Activated B cell treated with CpG ODN at 0.5 μM for 24 hours (primary cell): ENCODE measurements at regions of chr14 and their contacts with region 1.

Region 1: DNA sequence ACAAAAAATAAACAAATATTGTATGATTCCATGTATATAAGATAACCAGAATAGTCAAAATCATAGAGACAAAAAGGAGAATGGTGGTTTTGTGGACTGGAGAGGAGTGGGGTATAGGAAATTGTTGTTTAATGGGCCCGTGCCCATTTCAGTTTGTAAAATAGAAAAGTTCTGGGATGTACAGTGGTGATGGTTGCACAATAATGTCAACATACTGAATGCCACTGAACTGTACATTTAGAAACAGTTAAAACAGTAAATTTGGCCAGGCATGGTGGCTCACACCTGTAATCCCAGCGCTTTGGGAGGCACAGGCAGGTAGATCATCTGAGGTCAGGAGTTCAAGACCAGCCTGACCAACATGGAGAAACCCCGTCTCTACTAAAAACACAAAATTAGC is 40.1 kb downstream of the NUMB start:
- DNase-seq: no peak
- ATAC-seq: no peak
- H3K4me3 Mint-ChIP-seq: no peak overlapping the region
- H3K27ac Mint-ChIP-seq: no peak overlapping the region
- H3K4me1 Mint-ChIP-seq: peaks cover 54% of the 10 kb centered on the region
- H3K27me3 Mint-ChIP-seq: no peaks in the 10 kb centered on the region
- CTCF ChIP-seq: no peak

Region 2: GRCh38 chr14:73403181-73403752 is 15.0 kb before region 1 on chr14:
- CTCF ChIA-PET with region 1: interaction called, 4 read pairs
- POLR2A ChIA-PET with region 1: interaction called, 14 read pairs
- intact Hi-C with region 1: loop called (anchors 1 kb)
- DNase-seq: no peak
- ATAC-seq: no peak
- H3K4me3 Mint-ChIP-seq: no peak overlapping the region
- H3K27ac Mint-ChIP-seq: peak overlapping the region; percentile 88
- H3K4me1 Mint-ChIP-seq: peaks cover 57% of the 10 kb centered on the region
- H3K27me3 Mint-ChIP-seq: no peaks in the 10 kb centered on the region
- CTCF ChIP-seq: no peak

Region 3: GRCh38 chr14:73463411-73463810 is 45.2 kb after region 1 on chr14:
- CTCF ChIA-PET with region 1: no interaction called
- POLR2A ChIA-PET with region 1: interaction called, 6 read pairs
- intact Hi-C with region 1: loop called (anchors 2 kb)
- DNase-seq: no peak
- ATAC-seq: no peak
- H3K4me3 Mint-ChIP-seq: no peak overlapping the region
- H3K27ac Mint-ChIP-seq: peak overlapping the region; percentile 59
- H3K4me1 Mint-ChIP-seq: peaks cover 55% of the 10 kb centered on the region
- H3K27me3 Mint-ChIP-seq: no peaks in the 10 kb centered on the region
- CTCF ChIP-seq: no peak